ENCODE measurements at regions of chr17 and their contacts with region 1.

Region 1: DNA sequence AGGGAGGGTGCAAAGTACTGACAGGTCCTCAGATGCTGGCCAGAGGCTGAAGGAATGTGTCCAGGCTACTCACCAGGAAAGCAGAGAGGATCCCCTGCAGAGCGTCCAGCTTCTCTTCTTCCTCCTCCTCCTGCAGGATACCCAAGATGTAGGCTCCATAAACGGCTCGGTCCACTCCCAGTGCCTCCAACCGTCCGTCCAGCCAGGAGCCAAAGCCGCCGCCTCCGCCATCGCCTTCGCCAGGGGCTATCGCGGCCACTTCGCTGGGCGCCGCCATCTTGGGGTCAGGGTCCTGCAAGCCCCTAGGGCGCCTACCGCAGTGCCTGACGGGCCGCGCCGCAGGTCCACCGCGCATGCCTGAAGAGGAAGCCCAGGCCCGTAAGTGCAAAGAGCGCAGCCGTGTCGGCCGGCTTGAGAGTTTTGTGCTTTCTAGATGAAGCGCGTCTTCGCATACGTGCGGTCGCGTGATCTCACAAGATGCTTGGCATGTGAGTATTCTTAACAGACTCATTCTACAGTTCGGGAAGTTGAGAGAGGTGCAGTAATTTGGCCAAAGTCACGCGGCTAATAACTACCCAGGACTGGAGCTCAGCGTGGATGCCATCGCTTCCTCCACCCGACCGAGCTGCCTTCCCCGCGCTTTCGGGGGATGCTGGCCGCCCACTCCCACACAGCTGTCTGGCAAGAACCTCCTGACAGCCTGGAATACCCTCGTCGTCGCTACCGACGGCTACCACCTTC is at the start of gene CCDC43:
- DNase-seq: peak; percentile 94
- ATAC-seq: peak; percentile 99
- H3K4me3 Mint-ChIP-seq: peak within 1 kb of the TSS; percentile 98
- H3K27ac Mint-ChIP-seq: peak within 1 kb of the TSS; percentile 93
- H3K4me1 Mint-ChIP-seq: peaks cover 28% of the 10 kb centered on the region
- H3K27me3 Mint-ChIP-seq: no peaks in the 10 kb centered on the region
- total RNA-seq, gene CCDC43: 24.0 to 26.3 TPM

Region 2: DNA sequence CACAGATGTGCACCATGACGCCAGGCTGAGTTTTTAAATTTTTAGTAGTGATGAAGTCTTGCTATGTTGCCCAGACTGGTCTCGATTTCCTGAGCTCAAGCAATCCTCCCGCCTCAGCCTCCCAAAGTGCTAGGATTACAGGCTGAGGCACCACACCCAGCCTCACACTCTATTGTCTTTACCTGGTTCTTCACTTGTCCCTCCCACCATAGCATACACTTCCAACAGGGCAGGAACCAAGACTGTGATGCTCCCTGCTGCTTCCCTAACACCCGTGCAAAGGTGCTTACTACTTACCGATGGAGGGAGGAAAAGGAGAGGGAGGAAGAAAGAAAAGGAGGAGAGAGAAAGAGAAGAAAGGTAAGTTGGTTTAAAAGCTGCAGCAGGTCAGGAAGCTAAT is 74.8 kb before region 1 on chr17:
- CTCF ChIA-PET with region 1: no interaction called
- POLR2A ChIA-PET with region 1: no interaction called
- DNase-seq: no peak
- ATAC-seq: no peak
- H3K4me3 Mint-ChIP-seq: no peak overlapping the region
- H3K27ac Mint-ChIP-seq: no peak overlapping the region
- H3K4me1 Mint-ChIP-seq: no peaks in the 10 kb centered on the region
- H3K27me3 Mint-ChIP-seq: peaks cover 3% of the 10 kb centered on the region

Region 3: GRCh38 chr17:44655983-44656710 is 33.5 kb before region 1 on chr17 and contains the start of gene MEIOC:
- CTCF ChIA-PET with region 1: no interaction called
- POLR2A ChIA-PET with region 1: no interaction called
- DNase-seq: peak; percentile 45
- ATAC-seq: peak; percentile 88
- H3K4me3 Mint-ChIP-seq: peak within 1 kb of the TSS; percentile 54
- H3K27ac Mint-ChIP-seq: no peak within 1 kb of the TSS
- H3K4me1 Mint-ChIP-seq: peaks cover 8% of the 10 kb centered on the region
- H3K27me3 Mint-ChIP-seq: peaks cover 28% of the 10 kb centered on the region
- total RNA-seq, gene MEIOC: 0.16 to 0.26 TPM

Region 4: GRCh38 chr17:44672479-44673093 is 17.1 kb before region 1 on chr17:
- CTCF ChIA-PET with region 1: interaction called, 10 read pairs
- POLR2A ChIA-PET with region 1: no interaction called
- DNase-seq: no peak
- ATAC-seq: no peak
- H3K4me3 Mint-ChIP-seq: no peak overlapping the region
- H3K27ac Mint-ChIP-seq: no peak overlapping the region
- H3K4me1 Mint-ChIP-seq: no peaks in the 10 kb centered on the region
- H3K27me3 Mint-ChIP-seq: peaks cover 3% of the 10 kb centered on the region

Region 5: GRCh38 chr17:44708401-44709181 is 18.9 kb after region 1 on chr17 and contains the start of gene DBF4B:
- CTCF ChIA-PET with region 1: interaction called, 21 read pairs
- POLR2A ChIA-PET with region 1: interaction called, 21 read pairs
- DNase-seq: peak; percentile 91
- ATAC-seq: peak; percentile 85
- H3K4me3 Mint-ChIP-seq: no peak within 1 kb of the TSS
- H3K27ac Mint-ChIP-seq: no peak within 1 kb of the TSS
- H3K4me1 Mint-ChIP-seq: peaks cover 5% of the 10 kb centered on the region
- H3K27me3 Mint-ChIP-seq: peaks cover 7% of the 10 kb centered on the region
- total RNA-seq, gene DBF4B: 35.1 to 36.4 TPM